Cardiac septum (tissue), 1 donor: ENCODE measurements at regions of chr9 and their contacts with region 1.

Region 1: DNA sequence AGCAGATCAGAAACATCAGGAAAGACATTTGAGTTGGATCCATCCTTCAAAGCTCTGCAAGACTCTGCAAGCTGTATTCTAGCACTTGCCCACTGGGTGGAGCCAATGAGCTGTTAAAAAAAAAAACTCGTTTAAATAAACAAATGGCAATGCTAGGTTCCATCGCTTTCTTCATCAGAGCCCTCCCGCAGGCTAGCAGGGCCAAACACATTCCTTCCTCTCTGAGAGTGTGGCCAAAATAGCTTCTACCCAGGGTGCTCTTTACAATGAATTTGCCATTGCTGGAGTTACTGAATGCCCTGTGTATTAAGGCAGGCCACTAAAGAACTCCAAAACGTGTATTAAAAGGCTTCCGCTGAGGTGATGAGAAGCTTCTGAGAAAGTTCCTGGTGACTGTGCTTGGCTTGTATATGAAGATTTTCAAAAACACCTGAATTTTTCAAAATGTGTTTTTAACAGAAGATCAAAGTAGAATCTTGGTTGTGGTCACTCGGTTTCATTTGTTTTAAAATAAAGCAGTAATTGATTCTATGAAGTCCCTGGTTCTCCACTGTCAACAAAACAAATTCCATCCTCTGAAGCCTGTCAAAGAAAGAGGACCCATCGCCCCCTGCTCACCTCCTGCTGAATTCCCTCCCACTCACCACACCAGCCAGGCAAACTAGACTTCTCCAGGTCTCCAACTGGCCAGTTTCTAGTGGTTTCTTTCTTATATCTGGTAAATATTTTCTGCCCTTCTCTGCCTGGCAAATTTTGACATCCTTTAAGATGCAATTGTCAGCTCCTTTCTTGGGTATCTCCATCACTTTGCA is 36.5 kb upstream of the EQTN start:
- DNase-seq: no peak

Region 2: GRCh38 chr9:27292659-27293405 is 40.6 kb before region 1 on chr9:
- intact Hi-C with region 1: no loop called
- DNase-seq: no peak

Region 3: DNA sequence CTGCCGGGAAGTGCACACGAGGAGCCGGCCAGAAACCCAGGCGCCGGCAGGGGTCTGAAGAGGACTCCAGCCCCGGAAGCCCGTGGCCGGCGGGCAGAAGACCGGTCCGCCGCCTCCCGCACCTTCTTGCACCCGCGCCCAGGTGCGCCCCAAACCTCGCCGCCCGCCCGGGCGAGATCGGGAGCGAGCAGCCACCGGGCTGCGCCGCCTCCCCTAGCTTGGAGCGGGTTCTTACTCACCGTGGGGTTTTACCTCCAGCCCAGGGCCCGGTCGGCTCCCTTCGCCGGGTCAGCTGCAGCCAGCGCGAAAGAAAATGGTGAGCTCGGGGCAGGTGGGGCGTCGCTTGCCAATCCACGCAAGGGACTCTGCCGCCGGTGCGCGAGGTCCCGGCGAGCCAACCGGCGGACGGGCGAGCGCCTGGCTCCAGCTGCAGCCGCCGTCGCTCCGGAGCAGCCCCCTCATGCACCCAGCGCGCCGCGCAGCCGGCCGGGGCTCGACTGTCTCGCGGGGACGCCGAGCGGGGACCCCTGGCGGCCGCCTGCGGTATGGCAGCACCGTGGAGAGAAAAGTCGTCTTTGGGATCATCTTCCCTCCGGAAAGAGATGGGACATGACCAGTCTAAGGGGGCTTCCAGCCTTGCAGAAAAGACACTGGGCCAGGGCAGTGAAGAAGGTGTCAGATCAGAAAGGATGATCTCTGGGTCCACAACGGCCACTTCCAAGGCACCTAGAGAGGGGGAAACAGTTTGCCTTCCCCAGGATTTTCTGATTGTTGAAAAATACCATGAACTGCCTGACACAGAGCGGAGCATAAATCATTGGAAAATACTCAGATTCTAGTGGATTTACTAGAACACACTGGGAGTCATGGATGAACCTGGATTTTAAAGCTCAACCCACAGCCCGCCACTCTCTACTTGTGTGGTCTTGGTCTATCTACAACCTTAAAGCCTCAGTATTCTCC is 196.2 kb after region 1 on chr9 and contains the start of gene MOB3B:
- intact Hi-C with region 1: loop called (anchors 1 kb)
- DNase-seq: peak; percentile 94
- total RNA-seq, gene MOB3B: 0.51 TPM

Region 4: GRCh38 chr9:27548055-27548741 is 214.8 kb after region 1 on chr9:
- intact Hi-C with region 1: loop called (anchors 2 kb)
- DNase-seq: no peak

Region 5: DNA sequence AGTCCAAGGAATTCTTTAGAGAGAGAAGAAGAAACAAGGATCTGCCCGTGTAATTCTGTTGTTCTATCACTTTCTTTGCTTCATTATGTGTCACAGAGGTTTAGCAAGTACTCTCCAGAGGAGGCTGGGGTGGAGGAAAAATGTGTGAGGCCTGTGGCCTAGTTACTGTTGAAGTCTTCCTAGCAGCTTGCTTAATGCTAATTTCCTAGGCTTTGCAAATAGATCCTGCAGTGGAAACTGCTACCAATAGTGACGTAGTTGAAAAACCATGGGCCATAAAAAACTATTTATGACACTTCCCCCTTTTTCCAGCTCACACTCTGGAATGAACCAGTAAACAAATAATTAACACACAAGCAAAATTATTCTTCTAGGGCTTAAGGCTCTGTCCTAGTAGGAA is 266.8 kb after region 1 on chr9:
- intact Hi-C with region 1: no loop called
- DNase-seq: no peak

Region 6: GRCh38 chr9:27732494-27732893 is 399.0 kb after region 1 on chr9:
- intact Hi-C with region 1: no loop called
- DNase-seq: no peak